Activated B cell treated with CpG ODN at 0.5 μM for 24 hours (primary cell): ENCODE measurements at regions of chr14 and their contacts with region 1.

Region 1: GRCh38 chr14:24431569-24432258 is 2.0 kb downstream of the KHNYN start:
- DNase-seq: peak; percentile 73
- ATAC-seq: peak; percentile 41
- H3K4me3 Mint-ChIP-seq: peak overlapping the region; percentile 93
- H3K27ac Mint-ChIP-seq: peak overlapping the region; percentile 97
- H3K4me1 Mint-ChIP-seq: peaks cover 53% of the 10 kb centered on the region
- H3K27me3 Mint-ChIP-seq: no peaks in the 10 kb centered on the region
- CTCF ChIP-seq: peak; percentile 49

Region 2: GRCh38 chr14:24080888-24081738 is 350.6 kb before region 1 on chr14:
- CTCF ChIA-PET with region 1: no interaction called
- POLR2A ChIA-PET with region 1: interaction called, 4 read pairs
- intact Hi-C with region 1: loop called (anchors 2 kb)
- DNase-seq: peak; percentile 75
- ATAC-seq: peak; percentile 95
- H3K4me3 Mint-ChIP-seq: peak overlapping the region; percentile 82
- H3K27ac Mint-ChIP-seq: peak overlapping the region; percentile 83
- H3K4me1 Mint-ChIP-seq: peaks cover 32% of the 10 kb centered on the region
- H3K27me3 Mint-ChIP-seq: no peaks in the 10 kb centered on the region
- CTCF ChIP-seq: no peak

Region 3: GRCh38 chr14:24146978-24147760 is 284.5 kb before region 1 on chr14 and contains the start of gene RNF31:
- CTCF ChIA-PET with region 1: interaction called, 3 read pairs
- POLR2A ChIA-PET with region 1: interaction called, 10 read pairs
- intact Hi-C with region 1: no loop called
- DNase-seq: peak; percentile 91
- ATAC-seq: peak; percentile 85
- H3K4me3 Mint-ChIP-seq: peak within 1 kb of the TSS; percentile 97
- H3K27ac Mint-ChIP-seq: peak within 1 kb of the TSS; percentile 94
- H3K4me1 Mint-ChIP-seq: peaks cover 51% of the 10 kb centered on the region
- H3K27me3 Mint-ChIP-seq: no peaks in the 10 kb centered on the region
- CTCF ChIP-seq: no peak
- total RNA-seq, gene RNF31: 87.4 and 99.8 TPM in 2 replicates

Region 4: GRCh38 chr14:24232121-24232644 is 199.5 kb before region 1 on chr14 and contains the start of gene NEDD8:
- CTCF ChIA-PET with region 1: interaction called, 3 read pairs
- POLR2A ChIA-PET with region 1: no interaction called
- intact Hi-C with region 1: loop called (anchors 1 kb)
- DNase-seq: no peak
- ATAC-seq: peak; percentile 88
- H3K4me3 Mint-ChIP-seq: peak within 1 kb of the TSS; percentile 99
- H3K27ac Mint-ChIP-seq: peak within 1 kb of the TSS; percentile 94
- H3K4me1 Mint-ChIP-seq: peaks cover 43% of the 10 kb centered on the region
- H3K27me3 Mint-ChIP-seq: no peaks in the 10 kb centered on the region
- CTCF ChIP-seq: no peak
- total RNA-seq, gene NEDD8: 129 and 149 TPM in 2 replicates

Region 5: GRCh38 chr14:24310646-24311604 is 120.8 kb before region 1 on chr14 and contains the start of gene LTB4R:
- CTCF ChIA-PET with region 1: interaction called, 22 read pairs
- POLR2A ChIA-PET with region 1: interaction called, 23 read pairs
- intact Hi-C with region 1: loop called (anchors 1 kb)
- DNase-seq: peak; percentile 73
- ATAC-seq: peak; percentile 78
- H3K4me3 Mint-ChIP-seq: peak within 1 kb of the TSS; percentile 75
- H3K27ac Mint-ChIP-seq: peak within 1 kb of the TSS; percentile 80
- H3K4me1 Mint-ChIP-seq: peaks cover 59% of the 10 kb centered on the region
- H3K27me3 Mint-ChIP-seq: no peaks in the 10 kb centered on the region
- CTCF ChIP-seq: no peak
- total RNA-seq, gene LTB4R: 8.2 and 8.6 TPM in 2 replicates

Region 6: DNA sequence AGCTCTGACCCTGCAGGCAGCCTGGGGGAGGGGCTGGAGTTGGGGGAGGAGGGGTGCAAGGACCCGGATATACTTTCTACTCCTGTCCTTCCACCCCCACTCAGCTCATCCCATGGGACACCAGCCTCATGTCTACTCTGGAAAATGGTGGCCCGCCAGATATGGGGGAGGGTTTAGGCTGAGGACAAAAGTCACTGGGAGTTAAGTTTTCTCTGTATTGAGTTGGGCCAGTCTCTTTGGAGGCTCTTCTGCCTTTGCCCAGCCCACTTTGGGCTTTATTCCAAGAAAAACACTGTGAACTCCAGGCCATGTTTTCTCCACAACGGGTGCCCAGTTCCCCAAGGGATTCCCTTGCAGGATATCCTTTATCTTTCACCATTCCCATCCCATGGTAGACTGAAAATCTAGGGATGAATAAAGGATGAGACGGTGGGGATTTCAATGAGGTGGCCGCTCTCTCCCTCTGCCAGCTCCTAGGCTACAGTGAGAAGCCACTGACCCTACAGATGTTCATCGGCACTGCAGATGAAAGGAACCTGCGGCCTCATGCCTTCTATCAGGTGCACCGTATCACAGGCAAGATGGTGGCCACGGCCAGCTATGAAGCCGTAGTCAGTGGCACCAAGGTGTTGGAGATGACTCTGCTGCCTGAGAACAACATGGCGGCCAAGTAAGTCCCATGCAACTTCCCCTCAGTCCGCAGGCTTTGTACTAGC is 58.9 kb before region 1 on chr14:
- CTCF ChIA-PET with region 1: interaction called, 5 read pairs
- POLR2A ChIA-PET with region 1: interaction called, 257 read pairs
- intact Hi-C with region 1: no loop called
- DNase-seq: no peak
- ATAC-seq: no peak
- H3K4me3 Mint-ChIP-seq: no peak overlapping the region
- H3K27ac Mint-ChIP-seq: no peak overlapping the region
- H3K4me1 Mint-ChIP-seq: peaks cover 10% of the 10 kb centered on the region
- H3K27me3 Mint-ChIP-seq: peaks cover 2% of the 10 kb centered on the region
- CTCF ChIP-seq: no peak